ENCODE measurements at regions of chr3 and their contacts with region 1.

Region 1: GRCh38 chr3:16741890-16742289 is 136.7 kb upstream of the DAZL start:
- DNase-seq: no peak

Region 2: DNA sequence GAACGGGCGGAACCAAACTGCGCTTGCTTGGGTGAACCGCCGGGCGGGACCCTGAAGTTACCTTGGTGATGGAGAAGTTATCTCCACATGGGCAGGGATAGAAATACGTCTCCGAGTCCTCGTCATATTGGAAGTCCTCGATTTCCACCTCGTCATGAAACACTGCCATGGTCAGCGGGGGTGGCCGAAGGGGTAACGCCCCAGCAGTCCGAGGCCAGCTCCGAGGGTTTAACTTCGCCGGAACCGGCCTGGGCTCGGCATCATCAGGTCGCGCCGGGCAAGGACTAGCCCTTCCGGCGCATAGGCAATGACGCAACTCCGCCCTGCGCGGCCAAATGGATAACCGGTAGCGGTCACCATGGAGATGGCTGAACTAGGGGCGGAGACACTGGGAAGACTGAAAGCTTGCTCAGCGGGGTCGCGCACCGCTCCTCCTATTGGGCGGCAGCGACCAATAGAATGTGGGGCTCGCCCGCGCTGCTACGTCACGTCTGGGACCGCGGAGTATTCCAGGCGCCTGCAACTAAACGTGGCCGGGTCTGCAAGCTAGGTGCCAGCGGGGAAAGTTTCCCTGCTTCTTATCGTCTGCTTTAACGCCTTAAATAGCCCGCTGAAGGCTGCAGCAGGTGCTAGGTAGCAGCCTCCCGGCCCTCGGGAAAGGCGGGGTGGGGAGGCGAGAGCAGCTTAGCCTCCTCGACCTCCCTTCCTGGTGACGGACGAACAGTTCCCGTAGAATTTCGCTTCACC is 477.0 kb before region 1 on chr3 and contains the starts of genes DPH3 and OXNAD1:
- intact Hi-C with region 1: loop called (anchors 10 kb)
- DNase-seq: peak; percentile 99
- total RNA-seq, gene DPH3: 23.1 TPM
- total RNA-seq, gene OXNAD1: 15.1 TPM

Region 3: GRCh38 chr3:16723978-16724377 is 17.9 kb before region 1 on chr3:
- intact Hi-C with region 1: loop called (anchors 1 kb)
- DNase-seq: no peak

Region 4: GRCh38 chr3:16824081-16824696 is 82.3 kb after region 1 on chr3:
- intact Hi-C with region 1: no loop called
- DNase-seq: no peak